Activated CD8-positive, alpha-beta T cell treated with anti-CD3 and anti-CD28 coated beads, Interleukin-2, amount 10 ng/mL, durations not matched to agents 7 days and 5 days (primary cell): ENCODE measurements at regions of chr1 and their contacts with region 1.

Region 1: DNA sequence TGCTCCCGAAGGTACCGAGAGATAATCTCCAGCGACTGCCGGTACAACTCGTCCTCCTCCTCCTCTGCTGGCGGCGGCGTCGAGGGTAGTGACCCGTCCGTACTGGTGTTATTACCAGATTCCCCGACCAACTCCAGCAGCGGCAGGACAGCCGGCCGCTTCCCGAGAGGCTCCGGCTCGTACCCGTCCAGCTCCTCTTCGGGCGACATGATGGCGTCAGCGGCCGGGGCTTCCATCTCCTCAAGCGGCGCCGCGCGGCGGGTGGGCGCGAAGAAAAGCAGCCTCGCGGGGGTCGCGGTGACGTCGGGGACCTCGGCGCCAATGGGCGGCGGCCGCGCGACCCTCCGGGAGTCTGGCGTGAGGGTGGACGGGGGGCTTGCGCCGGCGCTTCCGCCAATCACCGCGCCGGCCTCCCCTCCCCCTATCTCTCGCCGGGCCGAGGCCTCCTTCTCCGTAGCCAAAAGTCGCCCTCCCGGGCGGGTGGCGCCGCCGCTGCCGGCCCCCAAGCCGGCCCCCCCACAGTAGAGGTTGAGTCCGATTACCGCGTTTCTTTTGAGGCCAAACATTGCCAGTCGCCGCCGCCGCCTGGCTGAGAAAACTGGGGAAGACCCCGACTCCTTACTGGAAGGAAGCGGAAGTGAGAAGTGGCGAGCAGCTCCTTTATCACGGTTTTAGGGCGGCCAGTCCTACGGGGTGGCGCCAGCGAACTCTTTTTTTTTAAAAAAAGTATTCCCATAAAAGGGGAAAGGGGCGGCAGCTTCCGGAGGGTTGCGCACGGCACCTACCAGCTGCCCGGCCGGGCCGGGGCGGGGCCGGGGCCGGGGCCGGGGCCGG is at the start of gene MCL1:
- DNase-seq: peak; percentile 94
- ATAC-seq: peak; percentile 75
- H3K4me3 Mint-ChIP-seq: peak within 1 kb of the TSS; percentile 97
- H3K27ac Mint-ChIP-seq: peak within 1 kb of the TSS; percentile 98
- H3K4me1 Mint-ChIP-seq: peaks cover 39% of the 10 kb centered on the region
- H3K27me3 Mint-ChIP-seq: no peaks in the 10 kb centered on the region
- total RNA-seq, gene MCL1: 249 to 261 TPM

Region 2: DNA sequence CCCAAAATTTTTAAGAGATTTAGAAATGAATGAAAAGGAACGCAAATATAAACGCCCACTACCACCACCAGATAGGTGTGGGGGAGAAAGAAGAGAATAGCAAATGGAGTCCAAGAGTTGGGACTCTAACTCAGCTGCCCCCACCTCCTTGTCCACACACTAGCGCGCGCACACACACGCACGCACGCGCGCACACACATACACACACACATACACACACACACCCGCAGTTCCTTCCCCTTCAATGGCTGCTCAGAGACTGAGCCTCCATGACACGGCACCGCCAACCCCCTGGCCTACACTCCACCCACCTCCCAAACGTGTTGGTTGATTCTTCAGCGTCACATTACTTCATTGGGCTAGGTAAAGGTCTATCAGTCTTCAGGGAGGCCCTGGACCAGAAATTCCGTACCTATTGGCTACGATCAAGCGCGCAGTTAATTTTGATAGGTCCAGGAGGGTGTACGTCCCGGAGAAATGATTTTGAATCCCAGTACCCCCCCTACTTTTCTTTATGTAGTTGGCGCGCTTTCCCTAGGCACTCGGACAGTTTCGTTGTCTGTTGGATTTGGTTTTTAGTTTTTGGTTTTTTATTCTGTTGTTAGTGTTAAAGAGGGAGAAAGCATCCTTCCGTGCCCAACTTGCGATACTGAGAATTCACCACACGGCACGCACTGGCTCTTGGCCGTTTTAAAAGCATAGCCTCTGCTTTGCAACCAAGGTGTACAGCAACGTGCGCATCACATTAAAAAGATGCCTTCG is 343.1 kb before region 1 on chr1 and contains the start of gene ANP32E:
- CTCF ChIA-PET with region 1: no interaction called
- POLR2A ChIA-PET with region 1: interaction called, 12 read pairs
- DNase-seq: peak; percentile 97
- ATAC-seq: peak; percentile 89
- H3K4me3 Mint-ChIP-seq: no peak within 1 kb of the TSS
- H3K27ac Mint-ChIP-seq: no peak within 1 kb of the TSS
- H3K4me1 Mint-ChIP-seq: peaks cover 21% of the 10 kb centered on the region
- H3K27me3 Mint-ChIP-seq: peaks cover 7% of the 10 kb centered on the region
- total RNA-seq, gene ANP32E: 155 to 161 TPM

Region 3: GRCh38 chr1:150507905-150508854 is 71.0 kb before region 1 on chr1 and contains the start of gene ECM1:
- CTCF ChIA-PET with region 1: no interaction called
- POLR2A ChIA-PET with region 1: no interaction called
- DNase-seq: no peak
- ATAC-seq: no peak
- H3K4me3 Mint-ChIP-seq: no peak within 1 kb of the TSS
- H3K27ac Mint-ChIP-seq: peak within 1 kb of the TSS; percentile 44
- H3K4me1 Mint-ChIP-seq: no peaks in the 10 kb centered on the region
- H3K27me3 Mint-ChIP-seq: no peaks in the 10 kb centered on the region
- total RNA-seq, gene ECM1: 0.71 to 0.78 TPM

Region 4: DNA sequence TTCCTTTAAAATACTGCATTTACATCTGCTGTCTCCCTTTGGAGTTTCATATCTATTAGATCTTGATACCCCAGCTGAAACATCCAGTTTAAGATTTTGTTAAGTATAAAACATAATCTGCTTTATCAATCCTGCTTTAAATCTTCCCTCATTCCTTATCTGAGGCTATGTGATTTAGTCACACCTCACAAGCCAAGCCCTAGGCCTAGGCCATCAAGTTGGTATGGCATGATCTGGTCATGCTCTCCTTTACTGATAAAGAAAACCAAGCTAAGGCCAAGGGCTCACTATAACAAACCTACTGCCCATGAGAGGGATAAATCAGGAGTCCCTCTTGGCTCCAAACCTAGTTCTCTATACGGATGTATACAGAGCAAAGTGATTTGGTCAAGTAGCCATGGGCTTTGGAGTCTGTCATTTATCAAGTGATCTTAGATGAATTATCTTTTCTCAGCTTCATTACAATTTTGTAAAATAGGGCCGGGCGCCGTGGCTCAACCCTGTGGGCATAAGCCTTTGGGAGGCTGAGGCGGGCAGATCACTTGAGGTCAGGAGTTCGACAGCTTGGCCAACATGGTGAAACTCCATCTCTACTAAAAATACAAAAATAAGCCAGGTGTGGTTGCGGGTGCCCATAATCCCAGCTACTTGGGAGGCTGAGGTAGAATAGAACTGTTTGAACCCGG is 27.4 kb after region 1 on chr1:
- CTCF ChIA-PET with region 1: interaction called, 3 read pairs
- POLR2A ChIA-PET with region 1: interaction called, 224 read pairs
- DNase-seq: no peak
- ATAC-seq: no peak
- H3K4me3 Mint-ChIP-seq: no peak overlapping the region
- H3K27ac Mint-ChIP-seq: no peak overlapping the region
- H3K4me1 Mint-ChIP-seq: peaks cover 17% of the 10 kb centered on the region
- H3K27me3 Mint-ChIP-seq: no peaks in the 10 kb centered on the region

Region 5: GRCh38 chr1:150621497-150622302 is 42.5 kb after region 1 on chr1:
- CTCF ChIA-PET with region 1: interaction called, 36 read pairs
- POLR2A ChIA-PET with region 1: interaction called, 224 read pairs
- DNase-seq: peak; percentile 72
- ATAC-seq: peak; percentile 37
- H3K4me3 Mint-ChIP-seq: no peak overlapping the region
- H3K27ac Mint-ChIP-seq: peak overlapping the region; percentile 80
- H3K4me1 Mint-ChIP-seq: peaks cover 46% of the 10 kb centered on the region
- H3K27me3 Mint-ChIP-seq: no peaks in the 10 kb centered on the region

Region 6: DNA sequence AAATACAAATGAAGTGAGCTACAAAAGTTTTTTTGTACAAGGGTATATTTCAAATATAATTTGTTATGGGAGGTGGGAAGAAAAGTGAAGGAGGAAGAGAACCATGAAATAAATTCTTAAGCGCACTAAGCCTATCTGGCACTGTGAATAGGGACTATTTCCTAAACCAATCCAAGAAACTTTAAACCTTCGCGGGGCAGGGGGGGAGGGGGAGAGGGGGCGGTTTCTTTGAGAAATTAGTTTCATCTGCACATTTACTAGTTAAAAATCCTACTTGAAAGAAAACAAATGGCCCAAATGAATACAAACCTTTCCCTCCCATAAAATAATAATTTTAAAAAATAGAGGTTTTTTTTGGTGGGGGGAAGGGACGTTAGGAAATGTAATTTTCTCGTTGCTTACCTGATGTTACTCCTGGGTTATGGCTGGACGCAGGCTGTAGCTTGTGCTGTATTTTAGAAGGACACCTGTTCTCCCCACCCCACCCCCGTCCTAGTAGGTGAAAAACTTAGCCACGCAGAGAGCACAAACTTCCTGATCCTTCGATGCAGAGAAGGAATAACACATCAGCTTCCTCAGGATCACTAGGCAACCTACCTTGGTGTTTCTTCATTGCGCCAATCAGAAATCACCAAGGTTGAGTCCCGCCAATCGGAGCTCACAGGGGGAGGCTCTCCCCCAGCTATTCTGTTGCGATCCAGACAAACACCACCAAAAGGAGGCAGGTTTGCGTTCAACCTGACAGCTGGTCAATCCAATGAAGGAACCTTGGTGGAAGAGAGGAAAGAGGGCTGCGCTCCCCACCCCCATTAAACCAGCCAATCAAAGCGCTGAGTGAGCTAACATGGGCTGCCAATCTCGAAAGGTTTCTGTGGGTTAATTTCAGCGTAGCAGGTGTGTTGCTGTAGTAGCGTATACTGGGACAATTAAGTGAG is 117.7 kb after region 1 on chr1 and contains the start of gene GOLPH3L:
- CTCF ChIA-PET with region 1: interaction called, 3 read pairs
- POLR2A ChIA-PET with region 1: interaction called, 12 read pairs
- DNase-seq: peak; percentile 96
- ATAC-seq: peak; percentile 100
- H3K4me3 Mint-ChIP-seq: peak within 1 kb of the TSS; percentile 93
- H3K27ac Mint-ChIP-seq: peak within 1 kb of the TSS; percentile 83
- H3K4me1 Mint-ChIP-seq: peaks cover 18% of the 10 kb centered on the region
- H3K27me3 Mint-ChIP-seq: peaks cover 8% of the 10 kb centered on the region
- total RNA-seq, gene GOLPH3L: 19.4 to 21.2 TPM

Region 7: GRCh38 chr1:150961799-150962198 is 382.6 kb after region 1 on chr1:
- CTCF ChIA-PET with region 1: no interaction called
- POLR2A ChIA-PET with region 1: no interaction called
- DNase-seq: no peak
- ATAC-seq: no peak
- H3K4me3 Mint-ChIP-seq: no peak overlapping the region
- H3K27ac Mint-ChIP-seq: no peak overlapping the region
- H3K4me1 Mint-ChIP-seq: no peaks in the 10 kb centered on the region
- H3K27me3 Mint-ChIP-seq: no peaks in the 10 kb centered on the region